ENCODE measurements at regions of chr7 and their contacts with region 1.

Region 1: DNA sequence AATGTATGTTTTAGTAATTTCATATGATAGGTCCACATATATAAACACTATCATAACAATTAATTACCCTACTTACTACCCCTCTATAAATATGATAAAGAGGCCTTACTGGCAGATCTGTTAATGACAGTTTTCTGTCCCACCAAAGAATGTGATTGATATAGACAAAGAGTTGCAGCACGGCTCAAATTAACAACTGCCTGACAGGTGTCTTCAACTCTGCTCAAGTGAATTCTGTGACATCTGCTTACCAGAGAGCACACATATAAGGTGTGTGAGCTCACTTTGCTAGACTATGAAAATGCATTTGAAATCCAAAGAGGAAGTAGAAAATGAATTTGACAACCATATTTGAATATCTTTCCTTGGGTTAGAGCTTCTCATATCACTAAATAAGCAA is 36.6 kb downstream of the CACNA2D1 start:
- DNase-seq: no peak
- H3K4me3 ChIP-seq: no peak overlapping the region
- H3K27ac ChIP-seq: no peak overlapping the region
- H3K4me1 ChIP-seq: no peaks in the 10 kb centered on the region
- H3K27me3 ChIP-seq: no peaks in the 10 kb centered on the region
- CTCF ChIP-seq: no peak
- POLR2A ChIP-seq: no peak

Region 2: DNA sequence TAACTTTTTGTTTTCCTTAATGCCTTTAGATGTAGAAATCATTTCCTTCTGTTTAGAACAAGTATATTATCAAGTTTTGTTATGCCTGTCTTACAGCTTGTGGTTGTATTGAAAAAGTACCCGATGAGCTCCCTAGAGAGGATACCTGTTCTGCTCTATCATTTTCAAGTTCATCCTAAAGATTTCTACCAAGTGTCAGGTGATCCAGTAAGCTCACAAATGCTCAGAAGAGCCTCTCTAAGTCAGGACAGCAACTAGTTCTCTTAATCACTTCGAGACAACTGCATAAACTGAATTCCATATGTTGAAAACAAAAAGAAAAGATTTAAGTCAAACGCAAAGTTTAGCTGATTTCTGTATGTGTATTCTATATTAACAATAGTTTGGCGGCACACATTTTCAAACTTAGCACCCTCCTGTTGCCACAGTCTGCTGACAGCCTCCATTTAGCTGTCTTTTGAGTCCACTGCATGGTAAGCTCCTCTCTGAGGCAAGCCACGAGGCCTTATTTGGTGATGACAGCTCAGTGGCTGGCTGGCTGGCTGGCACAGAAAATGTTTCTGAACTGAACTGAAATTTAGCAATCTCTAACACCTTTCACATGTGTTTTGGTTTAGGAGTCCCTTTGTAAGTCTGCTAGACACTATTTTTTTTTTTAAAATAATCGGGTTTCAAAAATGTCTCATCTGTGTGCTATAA is 1547.5 kb before region 1 on chr7:
- CTCF ChIA-PET with region 1: no interaction called
- POLR2A ChIA-PET with region 1: no interaction called
- dilution Hi-C with region 1: no loop called
- intact Hi-C with region 1: loop called (anchors 5 kb)
- DNase-seq: no peak
- H3K4me3 ChIP-seq: no peak overlapping the region
- H3K27ac ChIP-seq: no peak overlapping the region
- H3K4me1 ChIP-seq: no peaks in the 10 kb centered on the region
- H3K27me3 ChIP-seq: no peaks in the 10 kb centered on the region
- CTCF ChIP-seq: no peak
- POLR2A ChIP-seq: no peak

Region 3: DNA sequence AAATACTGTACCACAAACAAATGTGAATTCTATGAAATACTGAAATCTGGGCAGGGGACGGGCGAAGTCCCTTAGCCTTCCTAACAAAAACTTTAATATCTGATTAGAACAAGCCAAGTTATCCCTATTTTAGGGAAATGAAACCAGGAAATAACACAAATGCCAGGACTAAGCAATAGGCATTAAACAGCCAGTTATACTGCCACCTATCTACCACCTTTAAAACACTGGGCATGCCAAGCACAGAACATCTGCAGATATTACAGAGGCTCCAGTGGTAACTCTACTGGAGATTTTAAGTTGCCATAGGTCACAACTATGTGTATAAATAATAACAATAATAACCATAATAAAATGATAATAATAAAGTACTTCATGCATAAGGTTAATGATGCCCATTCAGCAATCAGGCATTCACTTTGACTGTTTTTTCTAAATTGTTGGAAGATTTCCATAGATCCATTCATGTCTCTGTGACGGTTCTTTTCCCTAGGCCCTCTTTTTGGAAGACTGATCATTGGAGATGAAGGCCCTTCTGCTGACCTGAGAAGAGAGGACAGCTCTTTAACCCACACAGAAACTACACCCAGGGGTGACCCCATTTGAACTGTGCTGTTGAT is 159.0 kb before region 1 on chr7:
- CTCF ChIA-PET with region 1: no interaction called
- POLR2A ChIA-PET with region 1: no interaction called
- dilution Hi-C with region 1: no loop called
- intact Hi-C with region 1: no loop called
- DNase-seq: no peak
- H3K4me3 ChIP-seq: no peak overlapping the region
- H3K27ac ChIP-seq: no peak overlapping the region
- H3K4me1 ChIP-seq: no peaks in the 10 kb centered on the region
- H3K27me3 ChIP-seq: no peaks in the 10 kb centered on the region
- CTCF ChIP-seq: peak; percentile 54 to 55
- POLR2A ChIP-seq: no peak

Measured in endothelial cell of umbilical vein (primary cell).